ENCODE measurements at regions of chr5 and their contacts with region 1.

Region 1: GRCh38 chr5:131170540-131171275 is at the start of gene LYRM7:
- DNase-seq: peak; percentile 70 to 99 (median 95)
- ATAC-seq: peak; percentile 98
- H3K4me3 ChIP-seq: peak within 1 kb of the TSS; percentile 74
- H3K4me3 Mint-ChIP-seq: peak within 1 kb of the TSS; percentile 95 to 100 (median 98)
- H3K27ac ChIP-seq: peak within 1 kb of the TSS; percentile 82
- H3K27ac Mint-ChIP-seq: peak within 1 kb of the TSS; percentile 92 to 98 (median 97)
- H3K4me1 ChIP-seq: peaks cover 11 to 16% of the 10 kb centered on the region in 2 donors
- H3K4me1 Mint-ChIP-seq: peaks cover 37 to 72% (median 63%) of the 10 kb centered on the region in 7 donors
- H3K27me3 ChIP-seq: no peaks in the 10 kb centered on the region
- H3K27me3 Mint-ChIP-seq: no peaks in the 10 kb centered on the region
- total RNA-seq, gene LYRM7: 8.2 to 18.8 (median 16.3) TPM

Region 2: GRCh38 chr5:131142970-131143617 is 27.6 kb before region 1 on chr5:
- CTCF ChIA-PET with region 1: no interaction called
- POLR2A ChIA-PET with region 1: no interaction called
- intact Hi-C with region 1: no loop called
- DNase-seq: no peak
- ATAC-seq: no peak
- H3K4me3 ChIP-seq: no peak overlapping the region
- H3K4me3 Mint-ChIP-seq: no peak overlapping the region
- H3K27ac ChIP-seq: no peak overlapping the region
- H3K27ac Mint-ChIP-seq: no peak overlapping the region
- H3K4me1 ChIP-seq: no peaks in the 10 kb centered on the region
- H3K4me1 Mint-ChIP-seq: peaks cover 0 to 16% (median 10%) of the 10 kb centered on the region in 7 donors
- H3K27me3 ChIP-seq: no peaks in the 10 kb centered on the region
- H3K27me3 Mint-ChIP-seq: peaks cover 0 to 3% (median 0%) of the 10 kb centered on the region in 5 donors

Region 3: DNA sequence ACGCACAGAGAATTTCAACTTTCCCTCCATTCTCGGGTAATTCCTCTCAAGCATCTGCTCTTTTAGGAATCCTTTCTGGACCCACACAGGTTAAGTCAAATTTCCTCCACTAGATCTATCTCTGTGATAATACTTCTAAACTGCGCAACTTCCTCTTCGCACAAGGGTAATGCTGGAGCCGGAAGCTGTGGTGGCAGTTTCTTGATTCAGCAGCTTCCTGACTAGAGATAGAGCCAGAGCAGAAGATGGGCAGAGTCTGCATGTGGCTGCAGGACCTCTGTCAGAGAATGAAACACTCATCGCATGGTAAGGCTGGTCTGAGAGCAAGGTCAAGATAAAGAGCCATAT is 82.1 kb after region 1 on chr5:
- CTCF ChIA-PET with region 1: interaction called, 5 read pairs
- POLR2A ChIA-PET with region 1: interaction called, 9 read pairs
- intact Hi-C with region 1: loop called (anchors 1 kb)
- DNase-seq: peak; percentile 41 to 90 (median 87)
- ATAC-seq: peak; percentile 93
- H3K4me3 ChIP-seq: peak overlapping the region; percentile 72
- H3K4me3 Mint-ChIP-seq: peak overlapping the region; percentile 80 to 97 (median 96)
- H3K27ac ChIP-seq: peak overlapping the region; percentile 78
- H3K27ac Mint-ChIP-seq: peak overlapping the region; percentile 91 to 97 (median 95)
- H3K4me1 ChIP-seq: peaks cover 51 to 54% of the 10 kb centered on the region in 2 donors
- H3K4me1 Mint-ChIP-seq: peaks cover 62 to 89% (median 67%) of the 10 kb centered on the region in 7 donors
- H3K27me3 ChIP-seq: no peaks in the 10 kb centered on the region
- H3K27me3 Mint-ChIP-seq: no peaks in the 10 kb centered on the region

Region 4: GRCh38 chr5:131357739-131358561 is 187.2 kb after region 1 on chr5:
- CTCF ChIA-PET with region 1: interaction called, 3 read pairs
- POLR2A ChIA-PET with region 1: interaction called, 4 read pairs
- intact Hi-C with region 1: loop called in 1 of 2 experiments (anchors 1 kb)
- DNase-seq: peak in 6 of 9 donors; percentile 23 to 52 (median 40)
- ATAC-seq: peak; percentile 73
- H3K4me3 ChIP-seq: no peak overlapping the region
- H3K4me3 Mint-ChIP-seq: peak overlapping the region; percentile 14 to 75 (median 56)
- H3K27ac ChIP-seq: peak overlapping the region; percentile 58
- H3K27ac Mint-ChIP-seq: peak overlapping the region; percentile 82 to 93 (median 86)
- H3K4me1 ChIP-seq: peaks cover 37 to 41% of the 10 kb centered on the region in 2 donors
- H3K4me1 Mint-ChIP-seq: peaks cover 32 to 83% (median 75%) of the 10 kb centered on the region in 7 donors
- H3K27me3 ChIP-seq: no peaks in the 10 kb centered on the region
- H3K27me3 Mint-ChIP-seq: no peaks in the 10 kb centered on the region

Region 5: DNA sequence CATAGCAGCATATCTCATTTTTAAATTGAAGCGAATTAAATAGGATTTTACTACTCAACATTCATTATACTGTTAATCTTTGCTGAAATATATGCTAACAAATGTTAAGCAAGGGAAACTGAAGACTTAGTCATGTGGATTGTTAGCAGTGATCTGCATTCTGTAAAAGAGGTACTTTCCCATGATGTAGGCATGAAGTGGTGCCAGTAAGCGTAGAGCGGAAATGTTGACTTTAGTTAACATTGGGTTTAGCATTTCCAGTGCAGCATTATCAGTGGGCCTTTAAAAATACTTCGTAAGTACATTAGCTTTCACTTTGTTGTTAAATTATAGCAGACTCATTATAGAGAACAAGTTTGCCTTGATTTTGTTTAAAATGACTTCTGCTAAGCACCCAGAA is 223.4 kb after region 1 on chr5:
- CTCF ChIA-PET with region 1: interaction called, 4 read pairs
- POLR2A ChIA-PET with region 1: interaction called, 3 read pairs
- intact Hi-C with region 1: loop called in 1 of 2 experiments (anchors 1 kb)
- DNase-seq: peak in 8 of 9 donors; percentile 36 to 84 (median 77)
- ATAC-seq: peak; percentile 97
- H3K4me3 ChIP-seq: no peak overlapping the region
- H3K4me3 Mint-ChIP-seq: peak overlapping the region in 9 of 10 donors; percentile 30 to 85 (median 69)
- H3K27ac ChIP-seq: peak overlapping the region; percentile 84
- H3K27ac Mint-ChIP-seq: peak overlapping the region; percentile 88 to 97 (median 91)
- H3K4me1 ChIP-seq: peaks cover 59 to 61% of the 10 kb centered on the region in 2 donors
- H3K4me1 Mint-ChIP-seq: peaks cover 28 to 95% (median 84%) of the 10 kb centered on the region in 7 donors
- H3K27me3 ChIP-seq: no peaks in the 10 kb centered on the region
- H3K27me3 Mint-ChIP-seq: no peaks in the 10 kb centered on the region

Region 6: DNA sequence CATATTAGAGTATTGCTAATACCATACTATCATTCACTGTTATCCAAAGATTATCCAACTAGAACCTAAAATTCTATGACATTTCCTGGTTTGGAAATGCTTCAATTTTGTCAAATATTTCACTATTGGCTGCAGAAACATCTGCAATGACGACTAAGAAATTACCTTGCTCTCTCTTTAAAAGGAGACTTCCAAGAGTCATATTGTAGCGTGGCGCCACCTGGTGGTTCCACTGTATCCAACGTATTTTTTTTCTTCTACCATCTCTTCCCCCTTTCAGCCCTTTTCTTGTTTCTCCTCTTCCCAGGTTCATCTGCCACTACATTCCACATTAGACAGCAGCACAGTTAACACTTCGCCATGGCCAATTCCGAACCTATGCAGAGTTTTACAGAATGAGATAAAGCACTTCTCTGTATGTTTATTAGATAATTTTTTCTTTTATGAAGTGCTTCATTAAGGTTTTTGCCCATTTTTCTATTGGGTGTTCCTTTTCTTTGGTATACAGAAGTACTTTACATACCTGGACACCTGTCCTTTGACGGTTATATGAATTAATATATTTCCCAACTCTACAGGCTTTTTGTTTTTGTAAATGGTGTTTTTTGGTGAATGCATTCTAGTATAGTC is 246.6 kb after region 1 on chr5:
- CTCF ChIA-PET with region 1: no interaction called
- POLR2A ChIA-PET with region 1: no interaction called
- intact Hi-C with region 1: loop called in 1 of 2 experiments (anchors 1 kb)
- DNase-seq: peak; percentile 61 to 78 (median 74)
- ATAC-seq: peak; percentile 81
- H3K4me3 ChIP-seq: no peak overlapping the region
- H3K4me3 Mint-ChIP-seq: peak overlapping the region in 7 of 10 donors; percentile 27 to 70 (median 45)
- H3K27ac ChIP-seq: peak overlapping the region; percentile 23
- H3K27ac Mint-ChIP-seq: peak overlapping the region; percentile 68 to 95 (median 81)
- H3K4me1 ChIP-seq: peaks cover 8 to 14% of the 10 kb centered on the region in 2 donors
- H3K4me1 Mint-ChIP-seq: peaks cover 17 to 52% (median 46%) of the 10 kb centered on the region in 7 donors
- H3K27me3 ChIP-seq: no peaks in the 10 kb centered on the region
- H3K27me3 Mint-ChIP-seq: no peaks in the 10 kb centered on the region